OCI-LY7 (cell line): ENCODE measurements at regions of chrX and their contacts with region 1.

Region 1: GRCh38 chrX:13750204-13750603 is 15.7 kb downstream of the OFD1 start:
- DNase-seq: peak; percentile 64
- H3K4me3 ChIP-seq: no peak overlapping the region
- H3K27ac ChIP-seq: peak overlapping the region; percentile 57
- H3K4me1 ChIP-seq: peaks cover 51% of the 10 kb centered on the region
- CTCF ChIP-seq: peak; percentile 79

Region 2: GRCh38 chrX:13506574-13506973 is 243.6 kb before region 1 on chrX:
- CTCF ChIA-PET with region 1: no interaction called
- POLR2A ChIA-PET with region 1: no interaction called
- intact Hi-C with region 1: loop called (anchors 10 kb)
- DNase-seq: peak; percentile 51
- H3K4me3 ChIP-seq: no peak overlapping the region
- H3K27ac ChIP-seq: no peak overlapping the region
- H3K4me1 ChIP-seq: no peaks in the 10 kb centered on the region
- CTCF ChIP-seq: peak; percentile 80

Region 3: DNA sequence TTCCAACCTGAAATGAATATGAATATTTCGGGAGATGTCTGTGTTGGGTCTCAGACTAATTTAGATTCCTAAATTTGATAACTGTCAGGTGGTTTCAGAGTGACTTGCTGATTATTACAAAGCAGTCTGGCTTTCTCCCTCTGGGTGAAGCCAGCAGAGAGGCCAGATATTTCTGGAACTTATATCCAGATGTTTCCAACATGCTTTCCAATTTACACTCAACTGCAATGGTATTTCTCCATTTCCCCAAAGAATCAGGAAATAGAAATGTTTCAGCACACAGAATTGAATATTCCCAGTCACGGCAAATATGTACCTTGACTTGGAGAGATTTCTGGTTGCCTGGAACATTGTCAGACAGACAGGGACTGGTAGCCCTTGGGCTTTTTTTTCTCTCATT is 229.3 kb before region 1 on chrX:
- CTCF ChIA-PET with region 1: no interaction called
- POLR2A ChIA-PET with region 1: no interaction called
- intact Hi-C with region 1: no loop called
- DNase-seq: no peak
- H3K4me3 ChIP-seq: no peak overlapping the region
- H3K27ac ChIP-seq: no peak overlapping the region
- H3K4me1 ChIP-seq: no peaks in the 10 kb centered on the region
- CTCF ChIP-seq: no peak

Region 4: GRCh38 chrX:13658602-13659001 is 91.6 kb before region 1 on chrX:
- CTCF ChIA-PET with region 1: no interaction called
- POLR2A ChIA-PET with region 1: no interaction called
- intact Hi-C with region 1: loop called (anchors 1 kb)
- DNase-seq: peak; percentile 65
- H3K4me3 ChIP-seq: peak overlapping the region; percentile 44
- H3K27ac ChIP-seq: peak overlapping the region; percentile 40
- H3K4me1 ChIP-seq: peaks cover 20% of the 10 kb centered on the region
- CTCF ChIP-seq: peak; percentile 85

Region 5: GRCh38 chrX:14872851-14873675 is 1122.9 kb after region 1 on chrX and contains the starts of genes FANCB and MOSPD2:
- CTCF ChIA-PET with region 1: no interaction called
- POLR2A ChIA-PET with region 1: no interaction called
- intact Hi-C with region 1: loop called (anchors 10 kb)
- DNase-seq: peak; percentile 92
- H3K4me3 ChIP-seq: peak within 1 kb of the TSS; percentile 88
- H3K27ac ChIP-seq: peak within 1 kb of the TSS; percentile 53
- H3K4me1 ChIP-seq: peaks cover 10% of the 10 kb centered on the region
- CTCF ChIP-seq: no peak
- total RNA-seq, gene FANCB: 15.2 TPM in 2 replicates
- total RNA-seq, gene MOSPD2: 8.0 and 8.8 TPM in 2 replicates